ENCODE measurements at regions of chr21 and their contacts with region 1.

Region 1: GRCh38 chr21:36310016-36310415 is 10.0 kb upstream of the MORC3 start:
- DNase-seq: peak; percentile 87
- H3K4me3 Mint-ChIP-seq: peak overlapping the region; percentile 27
- H3K27ac Mint-ChIP-seq: peak overlapping the region; percentile 82
- H3K4me1 Mint-ChIP-seq: peaks cover 7% of the 10 kb centered on the region
- H3K27me3 Mint-ChIP-seq: no peaks in the 10 kb centered on the region

Region 2: GRCh38 chr21:36193207-36193606 is 116.8 kb before region 1 on chr21:
- CTCF ChIA-PET with region 1: no interaction called
- intact Hi-C with region 1: no loop called
- DNase-seq: no peak
- H3K4me3 Mint-ChIP-seq: no peak overlapping the region
- H3K27ac Mint-ChIP-seq: no peak overlapping the region
- H3K4me1 Mint-ChIP-seq: peaks cover 8% of the 10 kb centered on the region
- H3K27me3 Mint-ChIP-seq: no peaks in the 10 kb centered on the region

Region 3: GRCh38 chr21:36297921-36298594 is 12.0 kb before region 1 on chr21:
- CTCF ChIA-PET with region 1: no interaction called
- intact Hi-C with region 1: loop called (anchors 1 kb)
- DNase-seq: peak; percentile 86
- H3K4me3 Mint-ChIP-seq: peak overlapping the region; percentile 40
- H3K27ac Mint-ChIP-seq: peak overlapping the region; percentile 85
- H3K4me1 Mint-ChIP-seq: peaks cover 50% of the 10 kb centered on the region
- H3K27me3 Mint-ChIP-seq: no peaks in the 10 kb centered on the region

Region 4: GRCh38 chr21:36917471-36918158 is 607.6 kb after region 1 on chr21:
- CTCF ChIA-PET with region 1: no interaction called
- intact Hi-C with region 1: no loop called
- DNase-seq: no peak
- H3K4me3 Mint-ChIP-seq: no peak overlapping the region
- H3K27ac Mint-ChIP-seq: no peak overlapping the region
- H3K4me1 Mint-ChIP-seq: peaks cover 3% of the 10 kb centered on the region
- H3K27me3 Mint-ChIP-seq: no peaks in the 10 kb centered on the region